ENCODE measurements at regions of chrX and their contacts with region 1.

Region 1: GRCh38 chrX:149962859-149963757 is 24.8 kb upstream of the EOLA2 start:
- DNase-seq: peak in 1 of 2 donors; percentile 25
- H3K4me3 ChIP-seq: no peak overlapping the region
- CTCF ChIP-seq: no peak
- POLR2A ChIP-seq: no peak

Region 2: DNA sequence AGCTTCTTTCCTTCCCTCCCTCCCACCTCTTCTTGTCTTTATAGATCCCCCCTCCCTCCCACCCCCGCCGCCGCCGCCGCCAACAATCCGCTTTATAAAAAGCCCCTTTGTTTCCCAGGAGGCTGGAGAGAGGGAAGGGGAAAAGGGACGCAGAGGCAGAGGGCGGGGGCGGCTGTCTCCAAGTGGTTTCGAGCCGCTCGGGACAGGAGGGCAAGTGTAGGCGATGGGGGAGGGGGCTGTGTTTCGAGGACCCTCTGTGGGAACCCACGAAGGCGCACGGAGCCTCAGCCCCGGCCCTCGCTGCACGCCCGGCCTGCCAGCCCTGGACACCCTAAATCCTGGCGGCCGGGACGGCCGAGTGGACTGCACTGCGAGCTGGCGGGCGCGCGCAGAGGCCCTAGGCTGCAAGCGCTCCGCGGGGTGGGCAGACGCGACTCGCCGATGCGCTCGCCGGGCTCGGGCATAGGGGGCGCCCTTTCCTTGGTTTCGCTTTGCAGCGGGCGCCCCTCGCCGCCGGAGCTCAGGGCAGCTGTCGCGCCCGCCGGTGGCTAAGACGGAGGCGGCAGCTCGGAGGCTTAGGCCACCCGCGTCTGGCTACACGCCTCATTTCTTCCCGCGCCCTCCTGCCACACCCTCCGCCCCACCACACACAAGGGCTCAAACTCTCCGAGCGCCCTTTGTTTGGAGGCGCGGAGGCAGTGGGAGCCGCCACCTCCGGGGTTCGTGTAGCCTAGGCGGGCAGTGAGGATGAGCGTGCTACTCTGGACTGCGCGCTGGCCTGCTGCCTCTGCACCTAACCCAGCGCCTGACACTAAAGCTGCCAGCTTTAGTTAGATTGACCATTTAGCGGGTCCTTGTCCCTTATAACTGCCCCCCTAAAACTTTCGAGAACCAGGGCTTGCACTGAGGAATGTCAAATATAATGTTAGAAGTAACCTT is 402.2 kb after region 1 on chrX:
- intact Hi-C with region 1: loop called (anchors 10 kb)
- DNase-seq: peak; percentile 40 to 92
- H3K4me3 ChIP-seq: peak overlapping the region; percentile 25
- CTCF ChIP-seq: peak in 1 of 3 donors; percentile 34
- POLR2A ChIP-seq: no peak

Measured in lower leg skin (tissue), 4 donors.